Testis (tissue), 5 donors: ENCODE measurements at regions of chr4 and their contacts with region 1.

Region 1: DNA sequence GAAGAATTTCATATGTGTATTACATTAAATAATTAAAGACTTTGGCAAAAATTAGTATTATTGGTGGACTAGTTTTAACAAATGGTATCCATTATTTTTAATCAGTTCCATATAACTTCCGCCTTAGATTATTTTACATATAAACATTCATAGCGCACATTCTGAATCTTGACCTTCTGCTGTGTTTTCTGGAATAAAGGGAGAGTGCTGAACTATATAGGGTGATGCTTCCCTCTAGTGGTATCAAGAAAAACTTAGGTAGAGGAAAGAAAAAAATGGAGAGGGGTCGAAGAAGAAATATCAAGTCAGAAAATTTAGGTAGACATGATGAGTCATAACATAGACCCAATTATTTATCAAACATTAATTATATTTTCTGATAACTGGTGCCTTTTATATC is 155.6 kb upstream of the PACRGL start:
- DNase-seq: no peak
- H3K4me3 ChIP-seq: no peak overlapping the region
- H3K27ac ChIP-seq: no peak overlapping the region
- H3K4me1 ChIP-seq: no peaks in the 10 kb centered on the region
- H3K27me3 ChIP-seq: no peaks in the 10 kb centered on the region
- CTCF ChIP-seq: peak in 2 of 3 experiments; percentile 52 to 58
- POLR2A ChIP-seq: no peak

Region 2: DNA sequence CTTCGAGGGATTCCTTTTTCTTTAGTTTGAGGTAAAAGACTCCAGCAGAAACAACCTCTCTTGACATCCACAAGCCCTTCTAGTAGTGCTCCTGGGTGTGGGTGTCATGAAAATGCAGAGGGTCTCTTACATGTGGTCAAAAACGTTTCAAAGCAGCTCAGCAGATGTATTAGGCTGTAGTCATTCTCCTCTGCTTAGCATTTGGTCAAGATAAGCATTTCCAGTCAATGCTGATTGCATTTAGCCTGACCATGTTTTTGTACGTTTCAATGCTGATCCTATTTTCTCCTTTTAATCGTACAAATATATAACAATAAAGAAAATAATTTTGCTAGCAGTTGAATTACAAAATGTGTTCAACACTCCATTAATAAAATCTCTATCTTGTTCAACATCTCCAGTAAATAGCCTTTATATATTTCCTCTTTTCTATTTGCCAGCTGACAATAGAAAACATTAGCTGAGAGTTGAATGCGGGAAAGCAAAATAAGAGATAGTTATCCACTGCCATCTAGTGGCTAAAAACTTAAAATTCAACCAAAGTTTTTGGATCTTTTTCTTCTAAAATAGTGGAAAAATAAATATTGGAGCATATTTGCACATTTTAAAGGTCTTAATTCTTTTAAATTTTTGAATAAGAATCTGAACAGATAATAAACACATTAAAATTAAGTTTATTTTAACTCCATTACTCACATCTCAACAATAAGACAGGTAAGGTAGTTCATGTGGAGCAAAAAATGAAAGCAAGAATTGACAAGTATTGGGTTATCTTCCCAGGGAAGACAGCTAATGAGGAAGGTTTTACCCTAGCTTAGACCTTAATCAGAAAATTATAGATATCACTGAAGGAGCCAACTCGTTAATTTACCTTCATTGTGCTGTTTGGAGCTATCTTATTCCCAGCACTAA is 140.5 kb after region 1 on chr4:
- intact Hi-C with region 1: loop called (anchors 10 kb)
- DNase-seq: no peak
- H3K4me3 ChIP-seq: no peak overlapping the region
- H3K27ac ChIP-seq: no peak overlapping the region
- H3K4me1 ChIP-seq: no peaks in the 10 kb centered on the region
- H3K27me3 ChIP-seq: no peaks in the 10 kb centered on the region
- CTCF ChIP-seq: peak; percentile 50 to 69 (median 56)
- POLR2A ChIP-seq: no peak